K562 (cell line): ENCODE measurements at regions of chr11 and their contacts with region 1.

Region 1: GRCh38 chr11:72430741-72431570 is 3.4 kb downstream of the CLPB start:
- DNase-seq: peak; percentile 57 to 73 (median 62)
- ATAC-seq: peak; percentile 60
- H3K4me3 ChIP-seq: no peak overlapping the region
- H3K27ac ChIP-seq: no peak overlapping the region; the same call in 2 of the 3 replicates
- H3K4me1 ChIP-seq: peaks cover 8 to 17% of the 10 kb centered on the region in 2 experiments; a peak in 4 of 5 replicates
- H3K27me3 ChIP-seq: no peaks in the 10 kb centered on the region
- CTCF ChIP-seq: peak; percentile 90 to 93 (median 92)
- EP300 ChIP-seq: no peak
- POLR2A ChIP-seq: no peak
- RAD21 ChIP-seq: peak; percentile 76 to 91

Region 2: GRCh38 chr11:71787098-71787823 is 643.7 kb before region 1 on chr11:
- CTCF ChIA-PET with region 1: no interaction called
- POLR2A ChIA-PET with region 1: no interaction called
- in situ Hi-C with region 1: no loop called
- intact Hi-C with region 1: loop called (anchors 10 kb)
- DNase-seq: peak; percentile 78 to 93 (median 84)
- ATAC-seq: peak; percentile 99
- H3K4me3 ChIP-seq: peak overlapping the region; percentile 55
- H3K27ac ChIP-seq: peak overlapping the region; percentile 85
- H3K4me1 ChIP-seq: peaks cover 0 to 6% of the 10 kb centered on the region in 2 experiments; a peak in 3 of 5 replicates
- H3K27me3 ChIP-seq: no peaks in the 10 kb centered on the region
- CTCF ChIP-seq: no peak
- EP300 ChIP-seq: no peak
- POLR2A ChIP-seq: no peak
- RAD21 ChIP-seq: no peak

Region 3: DNA sequence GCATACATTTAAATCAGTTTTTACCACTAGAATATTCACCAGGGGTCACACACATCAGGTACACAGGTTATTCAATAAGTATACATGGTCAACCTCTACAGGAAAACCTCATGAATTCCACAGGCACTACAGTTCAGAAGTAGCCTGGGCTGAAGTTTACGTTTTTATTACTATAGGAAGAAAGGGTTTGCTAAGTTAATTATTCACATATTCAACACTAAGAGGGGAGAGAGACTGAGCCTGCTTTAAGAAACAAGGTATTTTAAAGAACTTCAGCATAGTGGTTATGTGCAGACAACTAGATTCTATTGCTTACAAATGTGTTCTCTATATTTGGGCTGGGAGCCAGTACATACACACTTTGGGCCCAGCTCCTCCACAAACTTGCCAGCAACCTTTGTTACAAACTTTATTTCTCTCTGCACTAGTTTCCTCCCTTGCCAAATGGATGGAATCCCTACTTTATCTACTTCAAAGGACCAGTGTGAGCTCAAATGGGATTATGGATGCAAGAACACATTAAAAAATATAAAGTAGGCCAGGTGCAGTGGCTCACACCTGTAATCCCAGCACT is 400.4 kb before region 1 on chr11:
- CTCF ChIA-PET with region 1: interaction called, 17 read pairs
- POLR2A ChIA-PET with region 1: interaction called, 3 read pairs
- in situ Hi-C with region 1: loop called (anchors 5 kb)
- intact Hi-C with region 1: loop called (anchors 1 kb)
- DNase-seq: no peak
- ATAC-seq: no peak
- H3K4me3 ChIP-seq: no peak overlapping the region
- H3K27ac ChIP-seq: no peak overlapping the region
- H3K4me1 ChIP-seq: no peaks in the 10 kb centered on the region
- H3K27me3 ChIP-seq: no peaks in the 10 kb centered on the region
- CTCF ChIP-seq: no peak
- EP300 ChIP-seq: no peak
- POLR2A ChIP-seq: no peak
- RAD21 ChIP-seq: no peak

Region 4: DNA sequence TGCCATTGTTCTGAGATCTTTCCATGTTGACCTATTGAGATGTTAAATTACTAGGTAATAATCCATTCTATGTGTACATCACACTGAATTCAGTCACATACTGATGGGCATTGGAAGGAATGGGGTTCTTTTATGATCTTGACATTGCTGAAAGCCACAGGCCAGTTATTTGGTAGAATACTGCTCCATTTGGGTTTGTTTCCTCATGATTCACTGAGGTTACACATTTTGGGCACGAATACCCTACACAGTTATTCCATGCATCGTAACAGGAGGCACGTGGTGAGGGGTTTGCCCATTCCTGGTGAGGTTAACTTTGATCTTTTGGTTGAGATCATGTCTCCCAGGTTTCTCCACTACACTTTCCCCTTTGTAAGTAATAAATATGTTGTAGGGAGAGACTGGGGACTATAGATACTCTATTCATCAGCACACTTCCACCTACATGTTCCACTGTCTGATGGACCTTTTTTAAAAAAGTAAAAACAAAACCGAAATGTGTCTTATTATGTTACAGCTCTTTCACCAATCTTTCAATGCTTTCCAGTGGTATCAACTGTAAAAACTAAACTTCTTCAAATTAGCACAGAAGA is 251.1 kb before region 1 on chr11:
- CTCF ChIA-PET with region 1: no interaction called
- POLR2A ChIA-PET with region 1: no interaction called
- in situ Hi-C with region 1: no loop called
- intact Hi-C with region 1: loop called (anchors 5 kb)
- DNase-seq: no peak
- ATAC-seq: no peak
- H3K4me3 ChIP-seq: no peak overlapping the region
- H3K27ac ChIP-seq: no peak overlapping the region
- H3K4me1 ChIP-seq: peaks cover 0 to 3% of the 10 kb centered on the region in 2 experiments; a peak in 1 of 5 replicates
- H3K27me3 ChIP-seq: peaks cover 4 to 7% of the 10 kb centered on the region in 2 experiments; a peak in 2 of 5 replicates
- CTCF ChIP-seq: no peak
- EP300 ChIP-seq: no peak
- POLR2A ChIP-seq: no peak
- RAD21 ChIP-seq: no peak

Region 5: GRCh38 chr11:72293910-72294615 is 136.9 kb before region 1 on chr11:
- CTCF ChIA-PET with region 1: interaction called, 3 read pairs
- POLR2A ChIA-PET with region 1: no interaction called
- in situ Hi-C with region 1: no loop called
- intact Hi-C with region 1: loop called (anchors 5 kb)
- DNase-seq: no peak
- ATAC-seq: no peak
- H3K4me3 ChIP-seq: no peak overlapping the region
- H3K27ac ChIP-seq: no peak overlapping the region
- H3K4me1 ChIP-seq: 0 out of 5 replicates have a peak, but pooled peaks cover 0 to 3% of the 10 kb centered on the region in 2 experiments
- H3K27me3 ChIP-seq: no peaks in the 10 kb centered on the region
- CTCF ChIP-seq: no peak
- EP300 ChIP-seq: no peak
- POLR2A ChIP-seq: no peak
- RAD21 ChIP-seq: no peak

Region 6: GRCh38 chr11:72446902-72447769 is 16.2 kb after region 1 on chr11:
- CTCF ChIA-PET with region 1: interaction called, 13 read pairs
- POLR2A ChIA-PET with region 1: interaction called, 6 read pairs
- in situ Hi-C with region 1: no loop called
- intact Hi-C with region 1: loop called (anchors 1 kb)
- DNase-seq: peak; percentile 41 to 64 (median 53)
- ATAC-seq: peak; percentile 84
- H3K4me3 ChIP-seq: no peak overlapping the region
- H3K27ac ChIP-seq: no peak overlapping the region
- H3K4me1 ChIP-seq: peaks cover 0 to 2% of the 10 kb centered on the region in 2 experiments; a peak in 2 of 5 replicates
- H3K27me3 ChIP-seq: no peaks in the 10 kb centered on the region
- CTCF ChIP-seq: peak; percentile 77 to 99 (median 97)
- EP300 ChIP-seq: no peak
- POLR2A ChIP-seq: no peak
- RAD21 ChIP-seq: peak; percentile 83 to 84